ENCODE measurements at regions of chr9 and their contacts with region 1.

Region 1: DNA sequence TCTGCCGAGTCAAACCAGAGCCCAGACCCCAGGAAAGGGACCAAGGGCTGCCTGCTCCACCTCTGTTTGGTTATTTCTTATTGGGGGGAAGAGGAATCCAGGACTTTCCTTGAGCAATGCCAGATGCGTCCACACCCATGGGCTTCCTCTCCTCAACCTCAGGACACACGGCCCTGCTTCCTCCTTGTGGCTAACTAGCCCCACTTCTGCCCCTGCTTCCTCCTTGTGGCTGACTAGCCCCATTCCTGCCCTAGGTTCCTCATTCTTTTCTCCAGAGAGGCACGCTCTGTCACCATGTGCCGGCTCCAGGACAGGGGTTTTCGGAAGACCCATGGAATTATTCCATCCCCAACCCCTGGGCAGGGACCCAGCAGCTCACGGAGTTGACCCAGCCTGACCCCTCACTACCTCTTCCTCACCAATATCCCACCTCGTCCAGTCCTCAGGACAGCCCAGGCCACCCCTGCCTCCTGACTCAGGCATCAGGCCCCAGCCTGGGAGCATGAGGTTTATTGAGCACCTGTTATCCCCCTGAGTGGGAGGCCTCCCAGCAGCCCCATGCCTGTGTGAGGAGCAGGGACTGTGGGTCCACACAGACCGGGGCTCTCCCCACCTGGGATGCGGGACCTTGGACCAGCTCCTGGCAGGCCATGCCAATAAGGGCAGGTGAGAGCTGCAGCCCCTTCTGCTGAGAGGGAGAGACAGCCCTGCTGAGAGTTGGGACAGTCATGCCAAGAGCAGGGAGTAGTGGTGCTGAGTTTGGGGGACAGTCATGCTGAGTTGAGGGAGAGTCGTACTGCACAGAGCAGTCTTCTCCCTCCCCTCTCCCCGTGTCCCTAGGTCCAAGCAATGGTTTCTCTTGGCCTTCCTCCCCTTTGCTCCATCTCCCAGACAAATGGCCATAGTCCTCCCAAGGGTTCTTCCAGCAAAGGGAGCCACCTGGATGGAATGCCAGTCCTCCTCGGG is 11.8 kb upstream of the FCN1 start:
- DNase-seq: peak; percentile 90 to 97 (median 97)
- H3K4me3 ChIP-seq: peak overlapping the region in 2 of 3 experiments; percentile 5 to 68
- H3K4me3 Mint-ChIP-seq: peak overlapping the region; percentile 76 to 85
- H3K27ac ChIP-seq: peak overlapping the region; percentile 70 to 93
- H3K27ac Mint-ChIP-seq: peak overlapping the region; percentile 94 to 98 (median 97)
- H3K4me1 ChIP-seq: peaks cover 99 to 100% of the 10 kb centered on the region in 2 donors
- H3K4me1 Mint-ChIP-seq: peaks cover 96% of the 10 kb centered on the region
- H3K27me3 ChIP-seq: no peaks in the 10 kb centered on the region
- H3K27me3 Mint-ChIP-seq: peaks cover 0 to 4% (median 0%) of the 10 kb centered on the region in 3 donors
- CTCF ChIP-seq: no peak

Region 2: GRCh38 chr9:134059661-134060395 is 869.6 kb before region 1 on chr9:
- intact Hi-C with region 1: loop called (anchors 10 kb)
- DNase-seq: peak; percentile 90 to 96 (median 95)
- H3K4me3 ChIP-seq: peak overlapping the region in 2 of 3 experiments; percentile 16 to 67
- H3K4me3 Mint-ChIP-seq: peak overlapping the region; percentile 39 to 75
- H3K27ac ChIP-seq: peak overlapping the region; percentile 67 to 79
- H3K27ac Mint-ChIP-seq: peak overlapping the region; percentile 60 to 94 (median 92)
- H3K4me1 ChIP-seq: peaks cover 80 to 87% of the 10 kb centered on the region in 2 donors
- H3K4me1 Mint-ChIP-seq: peaks cover 81% of the 10 kb centered on the region
- H3K27me3 ChIP-seq: no peaks in the 10 kb centered on the region
- H3K27me3 Mint-ChIP-seq: peaks cover 0 to 5% (median 3%) of the 10 kb centered on the region in 3 donors
- CTCF ChIP-seq: no peak

Region 3: DNA sequence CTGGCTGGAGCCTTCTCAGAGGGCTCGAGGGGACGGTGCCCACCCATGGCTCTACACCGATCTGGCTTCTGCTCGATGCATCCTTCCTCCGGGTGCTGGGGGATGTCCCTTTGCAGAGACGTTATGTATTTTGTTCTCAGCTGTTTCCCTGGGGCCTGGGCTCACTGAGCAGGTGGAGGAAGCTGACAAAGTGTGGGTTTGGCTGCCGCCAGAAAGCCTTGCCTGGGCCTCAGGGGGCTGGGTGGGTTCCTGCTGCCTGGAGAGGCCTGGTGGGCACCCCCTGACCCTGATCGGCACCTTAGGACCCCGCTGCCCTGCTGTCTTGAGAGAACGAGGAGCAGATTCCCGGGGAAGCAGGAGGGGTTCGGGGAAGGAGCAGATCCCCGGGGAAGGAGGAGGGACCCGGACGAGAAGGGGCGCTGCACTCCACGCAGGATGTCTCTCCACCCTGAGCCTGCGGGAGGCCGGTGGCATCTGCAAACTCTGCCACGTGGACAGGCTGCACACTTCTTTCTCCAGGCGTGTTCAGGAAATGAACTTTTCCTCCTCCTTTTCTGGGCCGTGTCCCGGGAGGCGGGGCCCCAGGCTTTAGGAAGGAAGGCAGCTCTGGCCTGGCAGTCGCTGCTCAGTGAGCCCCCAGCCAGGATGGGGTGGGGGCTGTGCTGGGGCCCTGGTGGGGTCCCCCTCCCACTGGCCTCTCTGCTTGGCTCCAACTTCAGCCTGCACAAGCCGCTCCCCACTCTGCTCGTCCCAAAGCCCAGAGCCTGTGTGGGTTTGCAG is 454.3 kb before region 1 on chr9:
- intact Hi-C with region 1: loop called in 1 of 2 experiments (anchors 10 kb)
- DNase-seq: no peak
- H3K4me3 ChIP-seq: no peak overlapping the region
- H3K4me3 Mint-ChIP-seq: no peak overlapping the region
- H3K27ac ChIP-seq: peak overlapping the region; percentile 59 to 76
- H3K27ac Mint-ChIP-seq: peak overlapping the region in 4 of 7 donors; percentile 2 to 62 (median 22)
- H3K4me1 ChIP-seq: no peaks in the 10 kb centered on the region
- H3K4me1 Mint-ChIP-seq: no peaks in the 10 kb centered on the region
- H3K27me3 ChIP-seq: no peaks in the 10 kb centered on the region
- H3K27me3 Mint-ChIP-seq: peaks cover 4 to 20% (median 5%) of the 10 kb centered on the region in 3 donors
- CTCF ChIP-seq: no peak

Region 4: DNA sequence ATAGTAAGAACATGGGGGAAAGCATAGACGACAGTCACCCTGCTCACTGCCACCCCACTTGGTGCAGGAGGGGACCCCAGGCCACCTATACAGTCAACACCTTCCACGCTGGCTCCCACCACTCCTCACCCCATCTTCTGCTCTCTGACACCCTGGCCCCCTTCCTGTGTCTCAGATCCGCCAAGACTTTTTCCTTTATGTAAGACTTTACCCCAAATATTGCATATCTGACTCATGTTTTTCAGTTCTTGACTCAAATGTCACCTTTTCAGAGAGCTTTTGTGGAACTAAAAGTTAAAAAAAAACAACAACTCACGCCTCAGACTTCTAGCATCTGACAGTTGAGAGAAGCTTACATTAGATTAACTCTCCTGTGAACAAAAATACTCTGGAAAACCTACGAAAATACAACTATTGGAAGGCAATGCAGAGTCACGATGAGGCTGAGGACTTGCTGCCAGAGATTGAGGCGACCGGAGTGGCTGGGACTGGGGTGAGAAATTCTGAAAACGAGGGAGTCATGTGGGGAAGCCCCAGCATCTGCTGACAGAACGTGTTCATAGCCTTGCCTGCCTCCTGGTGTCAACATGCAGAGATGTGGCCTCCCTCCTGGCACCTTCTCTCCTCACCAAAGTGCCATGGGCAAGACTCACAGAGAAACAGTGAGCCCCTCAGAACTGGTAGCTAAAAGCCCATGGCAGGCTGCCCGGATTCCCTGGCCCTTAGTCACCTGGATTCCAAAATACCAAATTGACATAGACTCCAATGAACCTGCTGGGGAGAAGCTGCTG is 71.2 kb before region 1 on chr9:
- intact Hi-C with region 1: no loop called
- DNase-seq: no peak
- H3K4me3 ChIP-seq: no peak overlapping the region
- H3K4me3 Mint-ChIP-seq: no peak overlapping the region
- H3K27ac ChIP-seq: no peak overlapping the region
- H3K27ac Mint-ChIP-seq: no peak overlapping the region
- H3K4me1 ChIP-seq: no peaks in the 10 kb centered on the region
- H3K4me1 Mint-ChIP-seq: no peaks in the 10 kb centered on the region
- H3K27me3 ChIP-seq: no peaks in the 10 kb centered on the region
- H3K27me3 Mint-ChIP-seq: peaks cover 5 to 12% (median 12%) of the 10 kb centered on the region in 3 donors
- CTCF ChIP-seq: no peak

Region 5: DNA sequence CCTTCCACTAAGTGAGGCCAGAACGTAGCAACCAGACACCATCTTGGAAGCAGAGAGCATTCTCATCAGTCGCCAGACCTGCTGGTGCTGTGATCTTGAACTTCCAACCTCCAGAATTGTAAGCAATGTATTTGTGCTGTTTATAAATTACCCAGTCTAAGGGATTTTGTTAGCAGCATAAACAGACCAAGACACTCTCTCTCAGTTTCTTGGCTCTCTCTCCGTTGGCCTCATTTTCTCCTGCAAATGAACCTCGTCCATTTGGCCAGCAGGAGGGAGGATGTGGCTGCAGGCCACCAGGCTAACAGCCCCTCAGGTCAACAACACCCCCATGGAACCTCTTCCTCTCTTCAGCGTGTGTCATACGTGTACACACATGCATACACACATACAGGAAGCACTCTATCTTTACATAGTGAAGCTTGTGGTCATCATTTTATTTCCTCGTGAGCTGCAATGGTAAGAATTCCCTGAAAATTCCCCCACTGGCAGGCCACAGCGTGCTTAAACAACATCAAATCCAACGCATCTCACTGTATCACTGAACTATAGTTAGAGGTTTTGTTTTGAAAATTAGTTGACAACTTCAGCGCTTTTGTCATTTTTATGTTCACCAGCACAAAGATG is 487.3 kb after region 1 on chr9:
- intact Hi-C with region 1: no loop called
- DNase-seq: no peak
- H3K4me3 ChIP-seq: no peak overlapping the region
- H3K4me3 Mint-ChIP-seq: no peak overlapping the region
- H3K27ac ChIP-seq: no peak overlapping the region
- H3K27ac Mint-ChIP-seq: no peak overlapping the region
- H3K4me1 ChIP-seq: peaks cover 0 to 5% of the 10 kb centered on the region in 2 donors
- H3K4me1 Mint-ChIP-seq: peaks cover 7% of the 10 kb centered on the region
- H3K27me3 ChIP-seq: peaks cover 0 to 4% of the 10 kb centered on the region in 2 donors
- H3K27me3 Mint-ChIP-seq: peaks cover 26 to 58% (median 29%) of the 10 kb centered on the region in 3 donors
- CTCF ChIP-seq: no peak